ENCODE measurements at regions of chr7 and their contacts with region 1.

Region 1: GRCh38 chr7:99312316-99313203 is 13.1 kb upstream of the ARPC1A start:
- DNase-seq: peak; percentile 78
- ATAC-seq: peak; percentile 54
- H3K4me3 Mint-ChIP-seq: peak overlapping the region; percentile 41
- H3K27ac Mint-ChIP-seq: peak overlapping the region; percentile 15
- H3K4me1 Mint-ChIP-seq: peaks cover 27% of the 10 kb centered on the region
- H3K27me3 Mint-ChIP-seq: peaks cover 17% of the 10 kb centered on the region

Region 2: DNA sequence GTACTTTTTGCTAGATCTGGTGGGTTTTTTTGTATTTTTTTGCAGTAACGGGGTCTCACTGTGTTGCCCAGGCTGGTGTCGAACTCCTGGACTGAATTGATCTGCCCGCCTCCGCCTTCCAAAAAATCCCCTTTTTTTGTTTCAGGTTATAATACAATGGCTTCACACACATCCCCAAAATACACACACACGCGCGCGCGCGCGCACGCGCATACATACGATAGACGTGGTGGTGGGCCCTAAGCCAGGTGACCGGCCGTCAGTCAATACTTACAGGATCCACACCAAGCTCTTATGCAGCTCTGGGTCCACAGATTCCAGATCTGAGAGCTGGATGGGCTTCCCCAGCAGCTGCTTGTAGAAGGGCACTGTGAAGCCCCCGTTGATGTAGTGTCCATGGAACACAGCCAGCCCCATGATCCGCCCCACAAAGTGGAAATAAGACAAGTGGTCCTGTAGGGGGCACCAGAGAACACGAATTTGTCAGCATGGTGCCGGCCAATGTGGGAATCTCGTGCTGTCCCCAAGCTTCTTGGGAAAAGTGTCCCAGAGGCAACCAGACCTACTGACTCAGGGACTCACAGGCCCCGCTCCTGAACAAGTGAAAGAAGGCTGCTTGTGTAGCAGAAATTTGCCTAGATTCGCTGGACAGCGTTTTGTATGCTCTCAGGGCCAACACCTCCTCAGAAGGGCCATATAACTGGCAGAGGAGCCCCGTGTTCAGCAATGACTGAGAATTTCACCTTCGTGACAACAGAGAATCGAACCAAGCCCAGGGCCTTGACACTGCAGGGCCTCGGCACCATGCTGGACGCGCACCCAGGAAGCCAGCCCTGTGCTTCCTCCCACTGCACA is 272.2 kb before region 1 on chr7:
- CTCF ChIA-PET with region 1: interaction called, 25 read pairs
- DNase-seq: peak; percentile 68
- ATAC-seq: peak; percentile 70
- H3K4me3 Mint-ChIP-seq: no peak overlapping the region
- H3K27ac Mint-ChIP-seq: no peak overlapping the region
- H3K4me1 Mint-ChIP-seq: no peaks in the 10 kb centered on the region
- H3K27me3 Mint-ChIP-seq: no peaks in the 10 kb centered on the region

Region 3: DNA sequence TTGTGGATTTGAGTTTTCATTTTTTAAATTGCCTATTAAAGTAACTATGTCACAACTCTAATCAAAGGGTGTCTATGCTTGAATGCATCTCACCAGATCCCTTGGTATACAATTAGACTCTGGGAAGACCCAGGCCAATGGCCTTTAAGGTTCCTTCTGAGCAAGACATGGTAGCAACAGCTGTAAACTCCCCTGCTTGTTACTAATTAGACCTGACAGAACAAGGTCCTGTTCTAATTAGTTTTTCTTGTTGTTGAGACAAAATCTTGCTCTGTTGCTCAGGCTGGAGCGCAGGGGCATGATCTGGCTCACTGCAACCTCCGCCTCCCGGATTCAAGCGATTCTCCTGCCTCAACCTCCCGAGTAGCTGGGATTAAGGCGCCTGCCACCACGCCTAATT is 37.1 kb before region 1 on chr7:
- CTCF ChIA-PET with region 1: interaction called, 13 read pairs
- DNase-seq: no peak
- ATAC-seq: no peak
- H3K4me3 Mint-ChIP-seq: no peak overlapping the region
- H3K27ac Mint-ChIP-seq: no peak overlapping the region
- H3K4me1 Mint-ChIP-seq: peaks cover 27% of the 10 kb centered on the region
- H3K27me3 Mint-ChIP-seq: no peaks in the 10 kb centered on the region

Region 4: GRCh38 chr7:99325545-99326407 is 13.2 kb after region 1 on chr7 and contains the start of gene ARPC1A:
- CTCF ChIA-PET with region 1: interaction called, 29 read pairs
- DNase-seq: peak; percentile 93
- ATAC-seq: peak; percentile 95
- H3K4me3 Mint-ChIP-seq: peak within 1 kb of the TSS; percentile 82
- H3K27ac Mint-ChIP-seq: peak within 1 kb of the TSS; percentile 72
- H3K4me1 Mint-ChIP-seq: peaks cover 35% of the 10 kb centered on the region
- H3K27me3 Mint-ChIP-seq: no peaks in the 10 kb centered on the region
- total RNA-seq, gene ARPC1A: 53.2 to 56.3 TPM

Region 5: GRCh38 chr7:99408379-99409191 is 96.0 kb after region 1 on chr7 and contains the starts of genes BUD31 and PDAP1:
- CTCF ChIA-PET with region 1: no interaction called
- DNase-seq: peak; percentile 96
- ATAC-seq: peak; percentile 85
- H3K4me3 Mint-ChIP-seq: peak within 1 kb of the TSS; percentile 96
- H3K27ac Mint-ChIP-seq: peak within 1 kb of the TSS; percentile 90
- H3K4me1 Mint-ChIP-seq: peaks cover 54% of the 10 kb centered on the region
- H3K27me3 Mint-ChIP-seq: no peaks in the 10 kb centered on the region
- total RNA-seq, gene BUD31: 116 to 138 TPM
- total RNA-seq, gene PDAP1: 94.7 to 128 TPM

Measured in activated CD8-positive, alpha-beta memory T cell treated with anti-CD3 and anti-CD28 coated beads, Interleukin-2, amount 10 ng/mL, durations not matched to agents 7 days and 5 days (primary cell).